HCT116 (cell line): ENCODE measurements at regions of chr19 and their contacts with region 1.

Region 1: DNA sequence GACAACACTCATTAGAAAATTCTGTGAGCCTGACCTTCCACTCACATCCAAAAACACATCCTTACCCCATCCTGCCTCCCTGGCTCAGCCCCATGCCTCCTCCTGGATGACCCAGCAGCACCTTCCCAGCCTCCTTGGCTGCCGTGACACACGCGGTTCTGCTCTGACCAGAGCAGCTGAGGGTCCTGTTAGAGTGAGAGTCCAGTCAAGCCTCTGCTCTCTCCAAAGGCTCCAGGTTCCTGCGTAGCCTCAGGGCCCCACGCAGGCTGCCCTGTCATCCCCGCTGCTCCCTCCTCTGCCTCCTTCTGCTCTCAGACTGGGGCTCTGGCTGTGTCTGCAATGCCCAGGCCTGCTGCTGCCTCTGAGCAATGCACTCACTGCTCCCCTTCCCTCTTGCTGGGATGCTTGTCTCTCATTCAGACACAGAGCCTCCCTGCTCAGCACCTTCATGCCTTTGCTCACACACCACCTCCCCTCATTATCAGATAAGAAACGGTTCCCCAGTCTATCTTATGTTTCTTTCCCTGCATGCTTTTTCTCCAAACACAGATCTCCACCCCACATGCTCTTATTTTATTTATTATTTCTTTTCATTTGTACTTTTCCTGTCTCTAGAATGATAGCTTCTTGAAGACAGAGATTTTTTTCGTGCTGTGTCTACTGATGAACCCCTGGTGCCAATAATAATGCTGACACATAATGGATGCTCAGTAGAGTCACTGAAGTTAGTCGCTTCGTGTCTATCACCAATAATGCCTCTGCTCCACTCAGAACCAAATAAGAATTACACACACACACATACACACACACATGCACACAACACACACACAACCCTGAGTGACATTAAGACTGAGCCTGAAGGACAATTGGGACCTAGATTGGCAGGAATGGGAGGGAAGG is 10.2 kb upstream of the SIGLEC6 start:
- DNase-seq: no peak
- ATAC-seq: no peak
- H3K4me3 ChIP-seq: no peak overlapping the region
- H3K27ac ChIP-seq: no peak overlapping the region
- H3K4me1 ChIP-seq: no peaks in the 10 kb centered on the region
- H3K27me3 ChIP-seq: peaks cover 73% of the 10 kb centered on the region
- CTCF ChIP-seq: no peak
- POLR2A ChIP-seq: no peak
- RAD21 ChIP-seq: no peak

Region 2: DNA sequence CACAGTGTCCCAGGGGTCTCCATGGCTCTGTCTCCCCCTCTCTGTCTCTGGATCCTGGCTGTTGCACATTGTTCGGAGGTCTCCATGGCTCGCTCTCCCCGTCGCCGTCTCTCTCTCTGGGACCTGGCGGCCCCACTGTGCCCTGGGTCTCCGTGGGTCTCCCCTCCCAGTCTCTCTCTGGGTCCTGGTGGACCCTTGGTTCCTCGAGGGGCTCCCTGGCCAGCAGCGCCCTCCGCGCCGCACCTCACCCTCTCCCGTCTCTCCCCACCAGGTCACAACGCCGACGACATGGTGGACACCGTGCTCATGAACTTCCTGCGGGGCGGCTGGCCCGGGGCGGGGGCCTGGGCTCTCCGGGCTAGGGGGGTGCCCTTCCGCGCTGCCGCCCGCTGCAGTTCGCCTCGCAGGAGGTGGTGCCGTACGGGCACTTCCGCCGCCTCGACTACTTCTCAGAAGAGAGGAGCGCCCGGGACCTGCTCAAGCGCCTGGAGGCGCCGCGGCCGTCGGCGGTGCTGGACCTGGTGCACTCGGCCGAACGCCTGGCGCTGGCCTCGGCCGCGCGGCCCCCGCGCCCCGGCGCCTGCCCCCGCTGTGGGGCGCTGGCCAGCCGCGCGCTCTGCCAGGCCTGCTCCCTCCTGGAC is 59.4 kb after region 1 on chr19:
- CTCF ChIA-PET with region 1: no interaction called
- POLR2A ChIA-PET with region 1: no interaction called
- RAD21 ChIA-PET with region 1: no interaction called
- intact Hi-C with region 1: loop called (anchors 2 kb)
- DNase-seq: no peak
- ATAC-seq: no peak
- H3K4me3 ChIP-seq: no peak overlapping the region
- H3K27ac ChIP-seq: no peak overlapping the region
- H3K4me1 ChIP-seq: no peaks in the 10 kb centered on the region
- H3K27me3 ChIP-seq: peaks cover 4% of the 10 kb centered on the region; the same call in 1 of the 2 replicates
- CTCF ChIP-seq: no peak
- POLR2A ChIP-seq: no peak
- RAD21 ChIP-seq: no peak